A673 (cell line): ENCODE measurements at regions of chr15 and their contacts with region 1.

Region 1: DNA sequence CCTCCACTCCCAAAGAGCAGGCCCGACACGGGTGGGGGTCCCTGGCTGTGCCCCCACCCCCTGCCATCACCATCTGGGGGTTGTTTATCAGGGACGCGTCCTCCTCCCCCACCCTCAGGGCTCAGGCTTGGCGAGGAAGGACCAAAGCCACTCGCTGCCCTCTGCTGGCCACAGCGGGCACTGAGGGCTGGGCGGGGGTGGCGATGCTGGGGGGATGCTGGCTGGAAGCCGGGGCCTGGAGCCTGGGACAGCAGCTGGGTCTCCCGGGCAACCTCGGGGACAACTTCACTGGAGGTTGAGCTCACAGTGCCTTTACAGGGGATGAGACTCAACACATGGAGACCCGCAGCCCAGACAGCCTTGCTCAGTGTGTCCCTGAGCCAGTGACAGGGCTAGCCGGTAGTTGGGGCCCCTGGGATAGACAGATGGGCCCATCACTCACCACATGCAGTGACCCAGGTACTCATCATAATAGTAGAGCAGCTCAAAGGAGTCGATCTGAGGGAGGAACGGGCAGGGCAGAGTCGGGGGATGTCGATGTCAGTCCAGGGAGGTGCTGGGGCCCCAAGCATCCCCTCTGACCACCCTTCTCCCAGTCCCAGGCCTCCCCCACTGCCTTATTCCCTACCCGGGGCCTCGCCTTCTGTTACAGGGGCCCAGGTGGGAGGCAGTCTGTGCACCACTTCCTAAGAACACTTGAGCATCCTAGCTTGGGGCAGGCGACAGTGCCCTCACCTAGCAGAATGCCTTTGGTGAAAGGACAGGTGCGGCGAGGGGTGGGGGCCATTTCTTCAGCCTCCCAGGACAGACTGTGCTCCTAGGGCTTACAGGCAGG is 5.9 kb upstream of the CALML4 start:
- DNase-seq: peak; percentile 63
- H3K4me3 ChIP-seq: no peak overlapping the region
- H3K27ac ChIP-seq: no peak overlapping the region
- H3K4me1 ChIP-seq: no peaks in the 10 kb centered on the region
- H3K27me3 ChIP-seq: no peaks in the 10 kb centered on the region
- CTCF ChIP-seq: peak; percentile 81

Region 2: DNA sequence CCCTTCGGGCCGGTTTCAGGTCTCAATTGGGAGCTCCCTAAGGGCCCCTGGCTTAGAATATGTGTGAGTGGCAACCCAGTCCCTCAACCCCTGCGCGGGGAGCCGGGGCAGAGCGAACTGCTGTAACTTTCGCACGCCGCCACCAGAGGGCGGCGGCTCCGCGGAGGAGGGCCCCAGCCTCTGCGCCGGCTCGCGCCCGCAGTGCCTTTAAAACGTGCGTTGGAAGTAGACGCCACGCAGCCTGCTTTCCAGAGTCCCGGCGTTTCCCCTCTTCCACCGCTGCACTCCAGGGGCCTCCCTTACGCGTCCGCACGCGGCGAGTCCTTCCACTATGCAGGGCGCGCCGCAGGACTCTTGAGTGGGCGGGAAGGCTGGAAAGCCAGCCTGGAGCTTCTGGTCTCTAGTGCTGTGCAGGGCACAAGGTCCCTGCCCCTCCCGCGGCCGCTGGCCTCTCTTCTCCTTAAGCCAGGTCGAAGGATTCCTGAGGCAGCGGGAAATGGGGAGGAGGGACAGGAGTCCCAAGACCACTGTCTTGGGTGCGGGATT is 347.5 kb before region 1 on chr15:
- CTCF ChIA-PET with region 1: no interaction called
- POLR2A ChIA-PET with region 1: no interaction called
- intact Hi-C with region 1: loop called (anchors 2 kb)
- DNase-seq: peak; percentile 91
- H3K4me3 ChIP-seq: peak overlapping the region; percentile 38
- H3K27ac ChIP-seq: no peak overlapping the region
- H3K4me1 ChIP-seq: no peaks in the 10 kb centered on the region
- H3K27me3 ChIP-seq: no peaks in the 10 kb centered on the region
- CTCF ChIP-seq: peak; percentile 97

Region 3: GRCh38 chr15:68252925-68253534 is 42.0 kb after region 1 on chr15:
- CTCF ChIA-PET with region 1: no interaction called
- POLR2A ChIA-PET with region 1: interaction called, 16 read pairs
- intact Hi-C with region 1: no loop called
- DNase-seq: peak; percentile 86
- H3K4me3 ChIP-seq: no peak overlapping the region
- H3K27ac ChIP-seq: no peak overlapping the region
- H3K4me1 ChIP-seq: peaks cover 4% of the 10 kb centered on the region
- H3K27me3 ChIP-seq: no peaks in the 10 kb centered on the region
- CTCF ChIP-seq: peak; percentile 82

Region 4: GRCh38 chr15:68383161-68384074 is 172.4 kb after region 1 on chr15:
- CTCF ChIA-PET with region 1: interaction called, 17 read pairs
- POLR2A ChIA-PET with region 1: no interaction called
- intact Hi-C with region 1: no loop called
- DNase-seq: peak; percentile 63
- H3K4me3 ChIP-seq: no peak overlapping the region
- H3K27ac ChIP-seq: no peak overlapping the region
- H3K4me1 ChIP-seq: no peaks in the 10 kb centered on the region
- H3K27me3 ChIP-seq: no peaks in the 10 kb centered on the region
- CTCF ChIP-seq: peak; percentile 71